Colonic mucosa (tissue), 4 donors: ENCODE measurements at regions of chr1 and their contacts with region 1.

Region 1: GRCh38 chr1:214584805-214585766 is 17.9 kb upstream of the CENPF start:
- DNase-seq: no peak
- H3K4me3 ChIP-seq: no peak overlapping the region
- H3K27ac ChIP-seq: no peak overlapping the region
- H3K4me1 ChIP-seq: no peaks in the 10 kb centered on the region
- H3K27me3 ChIP-seq: no peaks in the 10 kb centered on the region
- CTCF ChIP-seq: peak; percentile 43

Region 2: GRCh38 chr1:214261206-214262123 is 323.6 kb before region 1 on chr1:
- intact Hi-C with region 1: loop called (anchors 5 kb)
- DNase-seq: peak; percentile 83
- H3K4me3 ChIP-seq: no peak overlapping the region
- H3K27ac ChIP-seq: no peak overlapping the region
- H3K4me1 ChIP-seq: no peaks in the 10 kb centered on the region
- H3K27me3 ChIP-seq: no peaks in the 10 kb centered on the region
- CTCF ChIP-seq: peak; percentile 96

Region 3: GRCh38 chr1:214328770-214329469 is 256.2 kb before region 1 on chr1:
- intact Hi-C with region 1: loop called (anchors 2 kb)
- DNase-seq: peak; percentile 77
- H3K4me3 ChIP-seq: no peak overlapping the region
- H3K27ac ChIP-seq: no peak overlapping the region
- H3K4me1 ChIP-seq: no peaks in the 10 kb centered on the region
- H3K27me3 ChIP-seq: no peaks in the 10 kb centered on the region
- CTCF ChIP-seq: peak; percentile 84

Region 4: DNA sequence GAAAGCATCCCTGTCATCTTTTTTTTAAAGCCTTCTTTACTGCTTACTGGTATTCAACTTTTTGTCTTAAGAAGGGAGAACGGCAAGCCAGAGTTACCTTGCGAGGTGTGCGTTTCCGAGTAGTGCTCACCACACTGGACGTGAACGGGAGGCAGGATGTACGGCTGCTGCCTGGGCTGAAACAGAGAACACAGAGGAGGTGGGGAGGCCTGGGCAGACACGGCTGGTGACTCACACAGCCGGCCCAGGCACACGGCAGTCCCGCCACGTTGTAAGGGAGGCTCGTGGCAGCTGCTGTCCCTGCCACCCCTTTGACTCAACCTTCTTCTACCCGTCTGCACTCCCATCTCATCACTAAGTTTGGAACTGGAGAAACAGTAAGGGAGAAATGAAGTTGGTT is 198.3 kb before region 1 on chr1:
- intact Hi-C with region 1: loop called (anchors 5 kb)
- DNase-seq: no peak
- H3K4me3 ChIP-seq: no peak overlapping the region
- H3K27ac ChIP-seq: no peak overlapping the region
- H3K4me1 ChIP-seq: no peaks in the 10 kb centered on the region
- H3K27me3 ChIP-seq: no peaks in the 10 kb centered on the region
- CTCF ChIP-seq: no peak